ENCODE measurements at regions of chr19 and their contacts with region 1.

Region 1: GRCh38 chr19:4400135-4400936 is at the start of gene SH3GL1:
- DNase-seq: peak; percentile 92
- H3K4me3 Mint-ChIP-seq: peak within 1 kb of the TSS; percentile 96
- H3K27ac Mint-ChIP-seq: peak within 1 kb of the TSS; percentile 96
- H3K4me1 Mint-ChIP-seq: peaks cover 78% of the 10 kb centered on the region
- H3K27me3 Mint-ChIP-seq: no peaks in the 10 kb centered on the region

Region 2: GRCh38 chr19:4065430-4066175 is 334.7 kb before region 1 on chr19:
- CTCF ChIA-PET with region 1: no interaction called
- DNase-seq: peak; percentile 97
- H3K4me3 Mint-ChIP-seq: peak overlapping the region; percentile 69
- H3K27ac Mint-ChIP-seq: peak overlapping the region; percentile 52
- H3K4me1 Mint-ChIP-seq: peaks cover 40% of the 10 kb centered on the region
- H3K27me3 Mint-ChIP-seq: peaks cover 3% of the 10 kb centered on the region

Region 3: GRCh38 chr19:4267101-4267900 is 133.0 kb before region 1 on chr19:
- CTCF ChIA-PET with region 1: interaction called, 14 read pairs
- DNase-seq: peak; percentile 77
- H3K4me3 Mint-ChIP-seq: no peak overlapping the region
- H3K27ac Mint-ChIP-seq: peak overlapping the region; percentile 42
- H3K4me1 Mint-ChIP-seq: peaks cover 30% of the 10 kb centered on the region
- H3K27me3 Mint-ChIP-seq: no peaks in the 10 kb centered on the region

Region 4: GRCh38 chr19:4471403-4472173 is 71.3 kb after region 1 on chr19:
- CTCF ChIA-PET with region 1: interaction called, 11 read pairs
- DNase-seq: peak; percentile 99
- H3K4me3 Mint-ChIP-seq: no peak overlapping the region
- H3K27ac Mint-ChIP-seq: no peak overlapping the region
- H3K4me1 Mint-ChIP-seq: peaks cover 20% of the 10 kb centered on the region
- H3K27me3 Mint-ChIP-seq: no peaks in the 10 kb centered on the region

Measured in activated naive CD4-positive, alpha-beta T cell treated with anti-CD3 and anti-CD28 coated beads, Interleukin-2, amount 10 ng/mL, durations not matched to agents 7 days and 5 days (primary cell).